Thyroid gland (tissue), 4 donors: ENCODE measurements at regions of chr18 and their contacts with region 1.

Region 1: DNA sequence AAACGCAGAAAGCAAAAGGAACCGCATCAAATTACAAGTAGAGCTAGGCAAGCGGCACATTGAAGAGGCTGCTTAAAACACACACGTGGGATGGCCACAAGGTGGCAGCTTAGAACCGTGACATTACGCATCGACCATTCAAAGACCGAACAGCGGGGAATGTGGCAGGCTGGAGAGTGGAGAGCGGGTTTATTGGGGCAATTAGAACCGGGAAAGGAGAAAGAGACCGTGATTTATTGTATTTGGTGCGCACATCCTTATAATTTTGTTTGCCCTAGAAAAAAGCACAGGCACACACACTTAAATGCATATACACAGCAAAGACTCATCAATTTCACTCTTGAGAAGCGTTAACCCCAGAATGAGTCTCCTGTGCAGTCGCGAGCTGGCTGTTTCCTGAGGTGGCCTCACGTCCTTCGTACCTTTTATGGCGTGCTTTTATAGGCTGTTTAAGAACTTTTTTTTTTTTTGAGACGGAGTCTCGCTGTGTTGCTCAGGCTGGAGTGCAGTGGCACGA is 31.7 kb upstream of the MEP1B start:
- DNase-seq: peak; percentile 78 to 83
- H3K4me3 ChIP-seq: no peak overlapping the region
- H3K27ac ChIP-seq: no peak overlapping the region
- H3K4me1 ChIP-seq: peaks cover 4 to 8% of the 10 kb centered on the region in 2 donors
- H3K27me3 ChIP-seq: no peaks in the 10 kb centered on the region
- CTCF ChIP-seq: peak; percentile 28 to 95 (median 80)
- POLR2A ChIP-seq: no peak

Region 2: DNA sequence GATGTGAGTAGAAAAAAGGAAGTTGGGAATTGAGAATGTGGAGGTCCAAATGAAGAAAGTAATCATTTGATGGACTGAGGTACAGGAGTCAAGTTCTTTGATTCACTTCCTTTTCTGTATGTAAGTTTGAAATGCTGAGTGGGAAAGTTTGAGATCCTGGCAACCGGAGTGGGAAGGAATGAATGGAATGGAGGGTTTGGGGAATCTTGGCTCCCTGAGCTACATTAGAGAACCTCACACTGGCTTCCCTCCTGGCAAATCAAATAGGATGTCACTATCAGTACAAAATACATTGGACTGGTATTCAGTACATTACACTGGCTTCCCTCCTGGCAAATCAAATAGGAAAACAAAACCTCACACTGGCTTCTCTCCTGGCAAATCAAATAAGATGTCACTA is 76.3 kb before region 1 on chr18:
- intact Hi-C with region 1: no loop called
- DNase-seq: no peak
- H3K4me3 ChIP-seq: no peak overlapping the region
- H3K27ac ChIP-seq: no peak overlapping the region
- H3K4me1 ChIP-seq: peaks cover 0 to 6% of the 10 kb centered on the region in 2 donors
- H3K27me3 ChIP-seq: no peaks in the 10 kb centered on the region
- CTCF ChIP-seq: no peak
- POLR2A ChIP-seq: no peak

Region 3: GRCh38 chr18:32261003-32261402 is 102.8 kb after region 1 on chr18:
- intact Hi-C with region 1: loop called (anchors 10 kb)
- DNase-seq: no peak
- H3K4me3 ChIP-seq: no peak overlapping the region
- H3K27ac ChIP-seq: no peak overlapping the region
- H3K4me1 ChIP-seq: no peaks in the 10 kb centered on the region
- H3K27me3 ChIP-seq: no peaks in the 10 kb centered on the region
- CTCF ChIP-seq: no peak
- POLR2A ChIP-seq: no peak

Region 4: GRCh38 chr18:32446780-32447179 is 288.6 kb after region 1 on chr18:
- intact Hi-C with region 1: no loop called
- DNase-seq: no peak
- H3K4me3 ChIP-seq: no peak overlapping the region
- H3K27ac ChIP-seq: no peak overlapping the region
- H3K4me1 ChIP-seq: no peaks in the 10 kb centered on the region
- H3K27me3 ChIP-seq: no peaks in the 10 kb centered on the region
- CTCF ChIP-seq: no peak
- POLR2A ChIP-seq: no peak

Region 5: DNA sequence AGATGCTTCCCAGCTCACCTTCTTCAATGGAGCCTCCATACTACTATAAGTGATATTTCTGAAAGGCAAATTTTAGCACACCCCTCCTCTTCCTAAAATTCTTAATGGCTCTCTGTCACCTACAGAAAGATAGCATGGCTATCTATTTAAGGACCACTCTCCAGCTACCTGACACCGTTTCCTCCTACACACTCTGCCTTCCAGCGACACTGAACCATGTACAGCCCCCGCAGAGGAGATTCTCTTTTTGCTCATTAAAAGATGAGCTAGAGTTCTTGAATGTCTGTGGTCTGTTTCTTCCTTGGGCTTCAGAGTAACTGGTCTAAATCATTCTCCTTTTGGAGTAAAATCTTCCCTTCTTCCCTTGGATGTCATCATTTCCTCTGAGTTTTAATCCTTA is 350.9 kb after region 1 on chr18:
- intact Hi-C with region 1: no loop called
- DNase-seq: no peak
- H3K4me3 ChIP-seq: no peak overlapping the region
- H3K27ac ChIP-seq: no peak overlapping the region
- H3K4me1 ChIP-seq: no peaks in the 10 kb centered on the region
- H3K27me3 ChIP-seq: no peaks in the 10 kb centered on the region
- CTCF ChIP-seq: no peak
- POLR2A ChIP-seq: no peak

Region 6: DNA sequence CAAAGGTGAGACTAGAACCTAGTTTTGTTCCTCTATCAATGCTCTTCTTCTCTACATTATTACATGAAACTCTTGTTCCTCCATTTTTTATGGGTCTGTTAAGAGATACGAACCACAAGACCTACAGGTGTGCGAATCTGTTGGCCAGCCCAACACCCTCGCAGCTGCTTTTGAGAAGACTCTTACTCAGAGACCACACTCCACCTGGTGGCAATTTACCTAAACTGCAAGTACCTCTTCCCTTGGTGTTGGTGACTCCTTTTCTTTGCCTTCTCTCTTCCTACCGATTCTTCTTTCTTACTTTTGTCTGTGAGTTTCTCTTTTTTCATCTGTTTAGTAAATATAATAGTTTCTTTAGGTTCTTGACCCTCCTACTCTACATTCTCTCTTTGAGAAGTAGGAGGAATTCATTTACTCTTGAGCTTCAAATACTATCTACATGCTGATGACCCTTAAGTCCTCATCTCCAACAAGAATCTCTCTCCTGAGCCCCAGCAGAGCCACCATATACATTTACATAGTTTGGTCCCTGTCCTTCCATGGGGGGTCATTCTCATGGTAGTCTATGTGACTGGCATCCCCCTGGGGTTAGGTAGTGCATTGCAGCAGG is 394.4 kb after region 1 on chr18:
- intact Hi-C with region 1: loop called (anchors 2 kb)
- DNase-seq: peak; percentile 62 to 66
- H3K4me3 ChIP-seq: no peak overlapping the region
- H3K27ac ChIP-seq: no peak overlapping the region
- H3K4me1 ChIP-seq: no peaks in the 10 kb centered on the region
- H3K27me3 ChIP-seq: no peaks in the 10 kb centered on the region
- CTCF ChIP-seq: peak; percentile 35 to 83 (median 65)
- POLR2A ChIP-seq: no peak

Region 7: DNA sequence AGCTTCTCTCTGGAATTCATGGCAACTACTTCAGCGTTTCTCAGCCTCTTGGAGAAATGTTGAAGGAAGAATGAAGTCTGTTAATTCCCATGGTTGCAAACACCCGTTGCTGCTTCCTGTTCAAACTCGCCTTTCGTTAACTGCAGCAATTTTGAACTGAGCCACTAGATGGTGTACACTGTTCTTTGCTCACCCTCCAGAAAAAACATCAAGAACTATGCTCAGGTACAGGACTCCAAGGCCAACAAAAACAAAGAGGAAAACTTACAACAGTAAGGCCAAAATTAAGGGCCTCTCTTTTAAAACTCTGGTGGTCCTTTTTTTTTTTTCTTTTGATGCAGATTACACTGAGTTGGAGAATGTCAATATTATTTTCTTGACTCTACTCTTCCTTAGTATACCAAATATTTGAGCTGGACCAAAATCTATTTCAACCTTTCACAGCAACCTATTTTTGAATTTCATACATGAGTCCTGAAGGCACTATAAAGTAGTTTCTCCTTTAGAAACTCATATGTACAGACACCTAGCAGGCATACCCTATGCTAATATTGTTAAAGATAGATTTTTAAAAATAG is 556.5 kb after region 1 on chr18:
- intact Hi-C with region 1: no loop called
- DNase-seq: peak; percentile 57 to 63
- H3K4me3 ChIP-seq: no peak overlapping the region
- H3K27ac ChIP-seq: peak overlapping the region in 1 of 3 donors; percentile 14
- H3K4me1 ChIP-seq: peaks cover 0 to 3% of the 10 kb centered on the region in 2 donors
- H3K27me3 ChIP-seq: no peaks in the 10 kb centered on the region
- CTCF ChIP-seq: peak; percentile 60 to 96 (median 80)
- POLR2A ChIP-seq: no peak